ENCODE measurements at regions of chr10 and their contacts with region 1.

Region 1: GRCh38 chr10:46022978-46023702 is 7.3 kb downstream of the NCOA4 start:
- DNase-seq: peak; percentile 98 to 99
- H3K4me3 ChIP-seq: peak overlapping the region; percentile 56
- H3K4me3 Mint-ChIP-seq: peak overlapping the region; percentile 82
- H3K27ac Mint-ChIP-seq: peak overlapping the region; percentile 90
- H3K4me1 ChIP-seq: peaks cover 45% of the 10 kb centered on the region
- H3K4me1 Mint-ChIP-seq: peaks cover 47% of the 10 kb centered on the region
- H3K27me3 ChIP-seq: no peaks in the 10 kb centered on the region
- H3K27me3 Mint-ChIP-seq: no peaks in the 10 kb centered on the region
- CTCF ChIP-seq: peak; percentile 49 to 94

Region 2: DNA sequence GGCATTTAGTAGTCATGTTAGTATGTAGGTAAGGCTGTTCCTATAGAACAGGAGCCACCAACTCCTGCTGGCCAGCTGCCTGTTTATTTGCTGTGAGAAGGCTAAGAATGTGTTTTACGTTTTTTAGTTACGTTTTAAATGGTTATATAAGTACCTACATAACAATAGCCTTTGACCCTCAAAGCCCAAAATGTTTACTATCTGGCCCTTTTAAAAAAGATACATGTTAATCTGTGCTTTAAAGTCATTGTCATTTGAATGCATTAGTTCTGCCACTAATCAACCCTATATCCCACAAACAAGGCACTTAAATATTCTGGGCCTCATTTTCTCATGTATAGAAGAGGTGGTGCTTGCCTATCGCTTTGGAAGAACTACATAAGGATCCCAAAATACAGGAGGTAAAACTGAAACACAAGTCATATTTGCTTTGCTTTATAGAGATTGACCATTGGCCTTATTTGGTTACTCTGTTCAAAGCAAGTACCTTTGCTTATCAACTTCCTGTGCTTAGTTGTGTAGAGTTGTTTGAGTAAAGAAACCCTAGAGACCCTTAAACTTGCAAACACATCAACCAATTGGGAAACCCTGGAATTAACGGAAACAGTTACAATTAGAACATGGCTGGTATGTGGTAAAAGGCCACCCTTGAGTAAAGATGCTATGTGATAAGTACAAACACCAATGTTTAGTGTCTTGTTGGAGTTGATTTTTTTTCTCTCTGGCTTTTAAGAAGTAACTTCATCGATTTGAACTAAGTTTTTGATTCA is 25.0 kb before region 1 on chr10:
- CTCF ChIA-PET with region 1: interaction called, 6 read pairs
- POLR2A ChIA-PET with region 1: no interaction called
- intact Hi-C with region 1: loop called (anchors 2 kb)
- DNase-seq: peak in 1 of 2 experiments; percentile 66
- H3K4me3 ChIP-seq: no peak overlapping the region
- H3K4me3 Mint-ChIP-seq: peak overlapping the region; percentile 11
- H3K27ac Mint-ChIP-seq: peak overlapping the region; percentile 57
- H3K4me1 ChIP-seq: peaks cover 27% of the 10 kb centered on the region
- H3K4me1 Mint-ChIP-seq: peaks cover 31% of the 10 kb centered on the region
- H3K27me3 ChIP-seq: no peaks in the 10 kb centered on the region
- H3K27me3 Mint-ChIP-seq: no peaks in the 10 kb centered on the region
- CTCF ChIP-seq: no peak

Region 3: DNA sequence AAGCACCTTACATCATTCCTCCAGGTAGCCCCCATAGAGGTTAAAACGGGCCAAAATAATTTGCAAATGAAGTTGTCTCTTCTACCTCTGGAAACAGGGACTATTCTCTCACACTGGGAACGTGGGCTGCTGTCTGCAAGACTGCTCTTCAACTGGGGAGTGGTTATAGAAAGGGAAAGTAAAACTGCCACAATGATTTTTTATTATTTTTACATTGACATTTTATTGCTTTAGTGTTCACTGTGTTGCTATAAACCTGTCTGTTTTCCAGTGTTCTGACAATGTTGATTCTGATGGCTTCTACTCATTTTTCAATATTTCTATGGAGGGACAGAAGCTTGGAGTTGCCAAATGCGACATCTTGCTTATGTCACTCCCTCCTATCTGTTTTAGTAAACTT is 148.5 kb after region 1 on chr10:
- CTCF ChIA-PET with region 1: no interaction called
- POLR2A ChIA-PET with region 1: no interaction called
- intact Hi-C with region 1: no loop called
- DNase-seq: no peak
- H3K4me3 ChIP-seq: no peak overlapping the region
- H3K4me3 Mint-ChIP-seq: no peak overlapping the region
- H3K27ac Mint-ChIP-seq: no peak overlapping the region
- H3K4me1 ChIP-seq: no peaks in the 10 kb centered on the region
- H3K4me1 Mint-ChIP-seq: no peaks in the 10 kb centered on the region
- H3K27me3 ChIP-seq: no peaks in the 10 kb centered on the region
- H3K27me3 Mint-ChIP-seq: peaks cover 20% of the 10 kb centered on the region
- CTCF ChIP-seq: no peak

Measured in Caco-2 (cell line).